CD14-positive monocyte (primary cell): ENCODE measurements at regions of chr6 and their contacts with region 1.

Region 1: GRCh38 chr6:36885461-36886401 is at the start of gene C6orf89:
- DNase-seq: peak; percentile 98 to 99 (median 99)
- H3K4me3 ChIP-seq: peak within 1 kb of the TSS; percentile 85 to 94 (median 87)
- H3K4me3 Mint-ChIP-seq: peak within 1 kb of the TSS; percentile 89 to 93
- H3K27ac ChIP-seq: peak within 1 kb of the TSS; percentile 53 to 91
- H3K27ac Mint-ChIP-seq: peak within 1 kb of the TSS; percentile 85 to 97 (median 92)
- H3K4me1 ChIP-seq: peaks cover 15 to 17% of the 10 kb centered on the region in 2 donors
- H3K4me1 Mint-ChIP-seq: peaks cover 25% of the 10 kb centered on the region
- H3K27me3 ChIP-seq: no peaks in the 10 kb centered on the region
- H3K27me3 Mint-ChIP-seq: no peaks in the 10 kb centered on the region
- CTCF ChIP-seq: peak; percentile 84
- polyA plus RNA-seq, gene C6orf89: 19.2 to 37.5 (median 29.2) TPM

Region 2: GRCh38 chr6:36851149-36851614 is 34.5 kb before region 1 on chr6:
- intact Hi-C with region 1: loop called in 1 of 2 experiments (anchors 5 kb)
- DNase-seq: peak; percentile 41 to 69 (median 58)
- H3K4me3 ChIP-seq: no peak overlapping the region
- H3K4me3 Mint-ChIP-seq: peak overlapping the region in 1 of 2 donors; percentile 30
- H3K27ac ChIP-seq: no peak overlapping the region
- H3K27ac Mint-ChIP-seq: peak overlapping the region in 1 of 7 donors; percentile 94
- H3K4me1 ChIP-seq: peaks cover 49 to 55% of the 10 kb centered on the region in 2 donors
- H3K4me1 Mint-ChIP-seq: peaks cover 59% of the 10 kb centered on the region
- H3K27me3 ChIP-seq: no peaks in the 10 kb centered on the region
- H3K27me3 Mint-ChIP-seq: peaks cover 3 to 9% (median 6%) of the 10 kb centered on the region in 3 donors
- CTCF ChIP-seq: peak; percentile 84

Region 3: GRCh38 chr6:36874443-36875249 is 11.1 kb before region 1 on chr6 and contains the start of gene PPIL1:
- intact Hi-C with region 1: loop called in 1 of 2 experiments (anchors 1 kb)
- DNase-seq: peak; percentile 74 to 87 (median 85)
- H3K4me3 ChIP-seq: peak within 1 kb of the TSS; percentile 90 to 98 (median 98)
- H3K4me3 Mint-ChIP-seq: peak within 1 kb of the TSS; percentile 94 to 100
- H3K27ac ChIP-seq: peak within 1 kb of the TSS; percentile 54 to 97
- H3K27ac Mint-ChIP-seq: peak within 1 kb of the TSS; percentile 95 to 100 (median 98)
- H3K4me1 ChIP-seq: peaks cover 15 to 23% of the 10 kb centered on the region in 2 donors
- H3K4me1 Mint-ChIP-seq: peaks cover 25% of the 10 kb centered on the region
- H3K27me3 ChIP-seq: no peaks in the 10 kb centered on the region
- H3K27me3 Mint-ChIP-seq: peaks cover 0 to 4% (median 3%) of the 10 kb centered on the region in 3 donors
- CTCF ChIP-seq: no peak
- polyA plus RNA-seq, gene PPIL1: 2.0 to 7.6 (median 5.9) TPM

Region 4: GRCh38 chr6:37207903-37208456 is 322.2 kb after region 1 on chr6:
- intact Hi-C with region 1: loop called (anchors 10 kb)
- DNase-seq: peak; percentile 79 to 83 (median 81)
- H3K4me3 ChIP-seq: no peak overlapping the region
- H3K4me3 Mint-ChIP-seq: peak overlapping the region; percentile 39 to 61
- H3K27ac ChIP-seq: no peak overlapping the region
- H3K27ac Mint-ChIP-seq: peak overlapping the region in 5 of 7 donors; percentile 19 to 77 (median 58)
- H3K4me1 ChIP-seq: peaks cover 22 to 24% of the 10 kb centered on the region in 2 donors
- H3K4me1 Mint-ChIP-seq: peaks cover 38% of the 10 kb centered on the region
- H3K27me3 ChIP-seq: no peaks in the 10 kb centered on the region
- H3K27me3 Mint-ChIP-seq: peaks cover 0 to 5% (median 0%) of the 10 kb centered on the region in 3 donors
- CTCF ChIP-seq: peak; percentile 93